ENCODE measurements at regions of chr16 and their contacts with region 1.

Region 1: GRCh38 chr16:3457434-3458252 is 14.2 kb downstream of the NAA60 start:
- DNase-seq: peak; percentile 87 to 91
- ATAC-seq: peak; percentile 86 to 96 (median 94)
- H3K4me3 ChIP-seq: peak overlapping the region; percentile 65 to 95 (median 83)
- H3K27ac ChIP-seq: peak overlapping the region; percentile 92 to 99 (median 98)
- H3K4me1 ChIP-seq: peaks cover 41 to 70% (median 56%) of the 10 kb centered on the region in 9 donors
- H3K27me3 ChIP-seq: no peaks in the 10 kb centered on the region
- CTCF ChIP-seq: peak in 8 of 9 donors; percentile 39 to 71 (median 59)

Region 2: DNA sequence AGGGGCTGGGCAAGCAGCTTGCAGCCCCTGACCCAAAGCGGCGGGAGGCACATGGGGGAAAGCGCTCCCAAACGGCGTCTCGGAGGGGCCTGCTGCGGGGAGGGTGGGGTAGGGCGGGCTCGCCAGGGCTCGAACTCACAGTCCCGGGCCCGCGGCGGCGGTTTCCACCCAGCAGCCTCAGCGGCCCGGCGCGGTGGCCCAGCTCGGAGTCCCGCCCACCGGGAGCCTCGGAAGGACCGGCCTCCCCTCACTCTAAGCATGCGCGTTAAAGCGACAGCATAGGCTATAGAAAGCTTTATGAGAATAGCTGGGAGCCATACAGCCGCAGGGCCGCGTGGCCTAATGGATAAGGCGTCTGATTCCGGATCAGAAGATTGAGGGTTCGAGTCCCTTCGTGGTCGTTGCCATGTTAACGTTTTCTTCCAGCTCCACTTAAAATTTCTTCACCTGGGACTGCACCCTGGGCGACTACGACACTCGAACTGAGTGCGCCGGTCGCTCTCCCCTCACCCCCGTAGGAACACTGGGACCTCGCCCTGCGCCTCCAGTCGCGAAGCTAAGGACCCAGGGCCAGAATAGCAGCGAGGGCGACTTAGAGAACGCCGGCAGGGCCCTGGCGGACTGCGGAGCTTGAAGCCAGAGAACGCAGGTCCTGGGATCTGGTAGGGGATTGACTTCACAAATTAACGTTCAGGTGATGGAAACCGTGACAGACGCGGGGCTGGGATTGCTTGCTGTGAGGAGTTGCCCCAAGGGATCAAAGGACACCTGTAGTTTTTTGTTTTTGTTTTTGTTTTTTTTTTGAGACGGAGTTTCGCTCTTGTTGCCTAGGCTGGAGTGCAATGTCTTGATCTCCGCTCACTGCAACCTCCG is 307.1 kb before region 1 on chr16:
- intact Hi-C with region 1: loop called in 1 of 10 experiments (anchors 10 kb)
- DNase-seq: peak; percentile 93 to 94
- ATAC-seq: peak; percentile 91 to 95 (median 94)
- H3K4me3 ChIP-seq: peak overlapping the region; percentile 53 to 78 (median 70)
- H3K27ac ChIP-seq: peak overlapping the region; percentile 59 to 93 (median 87)
- H3K4me1 ChIP-seq: peaks cover 2 to 38% (median 21%) of the 10 kb centered on the region in 9 donors
- H3K27me3 ChIP-seq: peaks cover 0 to 14% (median 0%) of the 10 kb centered on the region in 7 donors
- CTCF ChIP-seq: no peak

Region 3: GRCh38 chr16:3161136-3162018 is 296.3 kb before region 1 on chr16:
- intact Hi-C with region 1: loop called in 2 of 10 experiments (anchors 10 kb)
- DNase-seq: no peak
- ATAC-seq: no peak
- H3K4me3 ChIP-seq: no peak overlapping the region
- H3K27ac ChIP-seq: no peak overlapping the region
- H3K4me1 ChIP-seq: peaks cover 2 to 32% (median 28%) of the 10 kb centered on the region in 9 donors
- H3K27me3 ChIP-seq: peaks cover 0 to 7% (median 0%) of the 10 kb centered on the region in 7 donors
- CTCF ChIP-seq: no peak

Region 4: DNA sequence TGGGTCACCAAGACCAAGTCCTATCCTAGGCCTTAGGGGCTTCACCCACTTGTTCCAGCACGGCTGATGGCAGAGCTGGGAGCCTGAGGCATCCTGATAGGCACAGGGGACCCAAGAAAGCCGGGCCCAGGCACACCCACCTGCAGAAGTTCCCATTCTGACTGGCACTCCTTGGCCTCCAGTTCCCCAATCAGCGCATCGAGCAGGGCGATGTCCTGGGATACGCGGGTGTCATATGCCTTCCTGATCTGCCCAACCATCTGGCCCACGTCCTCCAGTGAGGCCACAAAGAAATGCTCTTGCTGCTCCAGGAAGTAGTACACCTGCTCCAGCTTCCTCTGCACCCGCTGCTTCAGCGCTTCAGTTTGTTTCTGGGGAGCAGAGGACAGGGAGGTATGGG is 210.8 kb before region 1 on chr16:
- intact Hi-C with region 1: no loop called
- DNase-seq: no peak
- ATAC-seq: no peak
- H3K4me3 ChIP-seq: no peak overlapping the region
- H3K27ac ChIP-seq: no peak overlapping the region
- H3K4me1 ChIP-seq: no peaks in the 10 kb centered on the region
- H3K27me3 ChIP-seq: peaks cover 0 to 24% (median 0%) of the 10 kb centered on the region in 7 donors
- CTCF ChIP-seq: no peak

Region 5: DNA sequence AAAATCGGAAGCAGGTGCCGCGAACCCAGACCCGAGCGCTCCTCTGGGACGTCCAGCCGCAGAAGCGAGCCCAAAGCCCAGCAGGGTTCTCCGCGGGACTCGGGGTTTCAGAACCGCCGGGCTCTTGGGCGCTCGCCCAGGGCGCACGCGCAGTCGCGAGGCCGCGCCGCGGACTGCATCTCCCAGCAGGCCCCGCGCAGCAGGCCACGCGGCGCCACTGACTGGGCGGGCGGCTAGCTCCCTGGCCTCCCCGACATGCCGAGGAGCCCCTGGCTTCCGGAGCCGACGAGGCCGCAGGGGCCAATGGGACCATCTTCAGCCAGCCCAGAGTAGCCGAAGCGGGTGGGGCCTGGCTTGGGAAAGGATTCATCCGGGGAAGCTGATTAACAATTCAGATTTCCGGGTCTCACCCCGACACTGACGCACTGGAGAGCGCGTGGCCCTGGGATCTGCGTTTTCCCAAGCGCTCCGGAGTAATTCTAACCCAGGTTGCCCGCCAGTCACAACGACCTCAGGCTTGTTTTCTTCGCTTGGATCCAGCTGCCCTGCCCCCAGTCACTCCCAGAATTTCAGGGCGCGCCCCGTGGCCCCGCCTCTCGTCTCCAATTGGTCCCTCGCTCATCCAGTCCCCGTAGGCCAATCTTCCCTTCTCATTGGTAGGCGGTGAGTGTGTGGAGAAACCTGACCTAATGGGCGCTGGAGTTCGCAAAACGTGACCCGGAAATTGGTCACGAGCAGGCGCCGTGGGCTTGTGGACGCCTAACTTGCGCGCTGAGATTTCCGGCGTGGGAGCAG is 174.7 kb before region 1 on chr16 and contains the start of gene ZNF263:
- intact Hi-C with region 1: loop called in 2 of 10 experiments (anchors 5 kb)
- DNase-seq: peak; percentile 94 to 97
- ATAC-seq: peak; percentile 94 to 98 (median 96)
- H3K4me3 ChIP-seq: peak within 1 kb of the TSS; percentile 75 to 100 (median 95)
- H3K27ac ChIP-seq: peak within 1 kb of the TSS; percentile 98 to 99 (median 99)
- H3K4me1 ChIP-seq: peaks cover 9 to 32% (median 26%) of the 10 kb centered on the region in 9 donors
- H3K27me3 ChIP-seq: no peaks in the 10 kb centered on the region
- CTCF ChIP-seq: no peak
- total RNA-seq, gene ZNF263: 7.2 to 13.2 (median 9.2) TPM

Region 6: DNA sequence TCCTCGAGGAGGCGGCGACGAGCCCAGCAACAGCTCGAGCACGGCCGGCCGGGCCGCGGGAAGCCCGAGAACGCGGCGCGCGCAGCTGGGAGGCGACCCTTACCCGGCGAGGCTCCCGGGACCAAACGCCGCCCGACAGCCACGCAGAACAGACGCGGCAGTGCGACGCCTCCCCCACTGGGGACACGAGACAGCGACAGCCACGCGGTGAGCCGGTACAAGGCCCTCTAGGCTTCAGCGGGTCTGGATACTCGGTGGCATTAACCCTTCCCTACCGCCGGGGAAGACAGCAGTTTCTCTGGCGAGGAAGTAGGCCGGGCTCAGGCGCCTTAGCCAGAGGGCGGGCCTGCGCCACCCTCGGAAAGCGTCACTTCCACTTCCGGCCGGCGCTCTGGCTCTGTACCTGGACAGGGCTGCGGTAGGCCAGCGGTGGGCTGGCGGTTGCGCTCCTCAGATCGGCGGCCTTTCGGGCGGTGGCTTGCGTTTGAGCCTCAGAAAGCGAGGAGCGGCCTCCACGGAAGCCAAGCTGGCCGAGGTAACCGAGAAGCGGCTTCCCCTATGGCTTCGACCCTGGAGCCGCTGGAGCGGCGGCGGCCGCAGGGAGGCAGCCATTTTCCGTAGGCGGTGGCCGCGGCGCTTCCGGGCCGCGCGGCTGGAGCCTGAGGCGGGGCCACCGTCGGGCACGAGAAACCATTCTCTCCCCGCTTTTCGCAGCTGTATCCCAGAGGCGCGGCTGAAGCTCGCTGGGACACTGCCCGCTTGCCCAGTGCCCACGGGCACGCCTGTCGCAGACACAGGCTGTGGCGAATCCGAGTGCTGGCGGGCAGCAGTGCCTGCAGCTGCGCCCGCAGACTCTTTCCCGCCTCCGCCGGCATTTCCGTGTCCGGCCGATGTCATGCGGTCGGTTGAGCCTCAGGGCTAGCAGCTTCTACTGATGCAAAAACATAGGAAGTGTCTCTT is 152.3 kb before region 1 on chr16 and contains the starts of genes TIGD7 and ZNF75A:
- intact Hi-C with region 1: loop called in 2 of 10 experiments (anchors 10 kb)
- DNase-seq: peak; percentile 86 to 89
- ATAC-seq: peak; percentile 98 to 100 (median 99)
- H3K4me3 ChIP-seq: peak within 1 kb of the TSS; percentile 49 to 89 (median 69)
- H3K27ac ChIP-seq: peak within 1 kb of the TSS; percentile 82 to 98 (median 93)
- H3K4me1 ChIP-seq: peaks cover 0 to 27% (median 17%) of the 10 kb centered on the region in 9 donors
- H3K27me3 ChIP-seq: no peaks in the 10 kb centered on the region
- CTCF ChIP-seq: peak in 4 of 9 donors; percentile 15 to 46 (median 34)
- total RNA-seq, gene TIGD7: 6.5 to 11.2 (median 8.7) TPM
- total RNA-seq, gene ZNF75A: 15.2 to 25.5 (median 21.6) TPM

Region 7: GRCh38 chr16:3503523-3503922 is 45.9 kb after region 1 on chr16:
- intact Hi-C with region 1: loop called in 2 of 10 experiments (anchors 5 kb)
- DNase-seq: no peak
- ATAC-seq: no peak
- H3K4me3 ChIP-seq: no peak overlapping the region
- H3K27ac ChIP-seq: peak overlapping the region in 1 of 10 donors; percentile 73
- H3K4me1 ChIP-seq: peaks cover 2 to 47% (median 12%) of the 10 kb centered on the region in 9 donors
- H3K27me3 ChIP-seq: no peaks in the 10 kb centered on the region
- CTCF ChIP-seq: no peak